ENCODE measurements at regions of chr2 and their contacts with region 1.

Region 1: GRCh38 chr2:223203971-223204929 is 152.3 kb downstream of the KCNE4 start:
- DNase-seq: no peak
- H3K4me3 ChIP-seq: no peak overlapping the region
- H3K27ac ChIP-seq: no peak overlapping the region
- H3K4me1 ChIP-seq: no peaks in the 10 kb centered on the region
- H3K27me3 ChIP-seq: no peaks in the 10 kb centered on the region
- CTCF ChIP-seq: no peak

Region 2: DNA sequence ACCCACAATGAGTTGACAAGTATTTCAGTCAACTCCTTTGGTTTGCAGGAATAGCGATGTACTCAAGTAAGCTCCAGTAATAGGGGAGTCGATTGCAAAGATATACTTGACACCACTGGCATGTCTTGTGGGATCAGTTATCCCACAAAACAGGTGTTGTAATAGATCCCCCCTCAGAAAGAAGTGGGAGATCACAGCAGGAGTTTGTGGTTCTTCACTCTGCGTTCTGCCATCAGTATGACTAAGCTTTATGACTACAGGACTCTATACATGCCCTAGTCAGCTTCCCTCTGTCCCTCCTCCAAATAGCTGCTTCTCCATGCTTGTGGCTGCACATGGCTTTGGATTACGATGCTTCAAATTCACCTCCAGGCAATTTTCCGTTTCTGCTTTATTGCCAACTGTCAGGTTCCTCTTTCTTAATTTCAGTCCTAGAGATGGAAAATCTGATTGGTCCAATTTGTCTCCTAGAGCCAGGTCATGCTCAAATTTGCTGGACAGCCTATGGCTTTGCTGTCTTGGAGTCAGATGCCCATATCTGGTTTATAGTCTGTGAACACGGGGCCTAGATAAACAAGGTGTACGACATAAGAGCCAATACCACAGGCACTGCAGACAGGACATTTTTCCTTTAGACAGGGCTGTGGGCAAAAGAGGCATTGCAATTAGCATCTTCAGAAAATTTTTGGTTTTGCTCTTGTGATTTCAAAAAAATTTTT is 1127.1 kb before region 1 on chr2:
- CTCF ChIA-PET with region 1: no interaction called
- POLR2A ChIA-PET with region 1: no interaction called
- intact Hi-C with region 1: loop called (anchors 5 kb)
- DNase-seq: no peak
- H3K4me3 ChIP-seq: no peak overlapping the region
- H3K27ac ChIP-seq: no peak overlapping the region
- H3K4me1 ChIP-seq: no peaks in the 10 kb centered on the region
- H3K27me3 ChIP-seq: peaks cover 30% of the 10 kb centered on the region
- CTCF ChIP-seq: no peak